Activated CD4-positive, alpha-beta T cell treated with anti-CD3 and anti-CD28 coated beads, Interleukin-2, amount 10 ng/mL, durations not matched to agents 24 days and 14 days (primary cell): ENCODE measurements at regions of chr16 and their contacts with region 1.

Region 1: DNA sequence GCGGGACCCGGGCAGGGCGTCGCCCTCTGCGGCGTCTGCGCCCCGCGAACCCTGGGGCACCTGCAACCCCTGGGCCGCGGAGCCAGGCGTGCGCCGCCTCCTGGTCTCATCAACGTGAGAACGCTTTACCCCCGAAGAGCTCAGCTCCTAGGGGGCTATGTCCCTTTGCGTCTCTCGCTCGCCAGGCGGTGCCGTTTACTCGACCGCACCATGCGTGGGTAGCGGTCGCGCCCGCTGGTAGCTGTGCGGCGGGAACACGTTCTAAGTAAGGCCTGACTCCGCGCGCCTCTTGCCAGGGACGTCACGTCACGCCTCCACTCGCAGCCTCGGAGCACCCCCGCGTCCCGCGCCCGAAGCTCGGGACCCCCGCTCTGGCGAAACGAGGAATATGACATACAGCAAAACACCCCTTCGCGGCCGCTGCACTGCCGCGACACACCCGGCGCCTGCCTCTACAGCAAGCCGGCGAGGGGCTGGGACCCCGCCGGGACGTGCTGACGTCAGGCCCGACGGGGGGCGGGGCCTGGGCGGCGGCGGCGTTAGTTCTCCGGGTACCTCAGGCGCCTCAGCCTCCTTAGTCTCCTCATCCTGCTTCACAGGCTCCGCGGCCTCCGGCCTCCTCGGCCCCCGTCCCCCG is at the start of gene RAB11FIP3:
- DNase-seq: peak; percentile 97
- H3K4me3 Mint-ChIP-seq: peak within 1 kb of the TSS; percentile 86
- H3K27ac Mint-ChIP-seq: peak within 1 kb of the TSS; percentile 88
- H3K4me1 Mint-ChIP-seq: peaks cover 25% of the 10 kb centered on the region
- H3K27me3 Mint-ChIP-seq: peaks cover 16% of the 10 kb centered on the region
- total RNA-seq, gene RAB11FIP3: 40.2 and 40.5 TPM in 2 replicates

Region 2: GRCh38 chr16:442976-443375 is 17.8 kb after region 1 on chr16:
- intact Hi-C with region 1: no loop called
- DNase-seq: no peak
- H3K4me3 Mint-ChIP-seq: no peak overlapping the region
- H3K27ac Mint-ChIP-seq: no peak overlapping the region
- H3K4me1 Mint-ChIP-seq: peaks cover 2% of the 10 kb centered on the region
- H3K27me3 Mint-ChIP-seq: no peaks in the 10 kb centered on the region

Region 3: DNA sequence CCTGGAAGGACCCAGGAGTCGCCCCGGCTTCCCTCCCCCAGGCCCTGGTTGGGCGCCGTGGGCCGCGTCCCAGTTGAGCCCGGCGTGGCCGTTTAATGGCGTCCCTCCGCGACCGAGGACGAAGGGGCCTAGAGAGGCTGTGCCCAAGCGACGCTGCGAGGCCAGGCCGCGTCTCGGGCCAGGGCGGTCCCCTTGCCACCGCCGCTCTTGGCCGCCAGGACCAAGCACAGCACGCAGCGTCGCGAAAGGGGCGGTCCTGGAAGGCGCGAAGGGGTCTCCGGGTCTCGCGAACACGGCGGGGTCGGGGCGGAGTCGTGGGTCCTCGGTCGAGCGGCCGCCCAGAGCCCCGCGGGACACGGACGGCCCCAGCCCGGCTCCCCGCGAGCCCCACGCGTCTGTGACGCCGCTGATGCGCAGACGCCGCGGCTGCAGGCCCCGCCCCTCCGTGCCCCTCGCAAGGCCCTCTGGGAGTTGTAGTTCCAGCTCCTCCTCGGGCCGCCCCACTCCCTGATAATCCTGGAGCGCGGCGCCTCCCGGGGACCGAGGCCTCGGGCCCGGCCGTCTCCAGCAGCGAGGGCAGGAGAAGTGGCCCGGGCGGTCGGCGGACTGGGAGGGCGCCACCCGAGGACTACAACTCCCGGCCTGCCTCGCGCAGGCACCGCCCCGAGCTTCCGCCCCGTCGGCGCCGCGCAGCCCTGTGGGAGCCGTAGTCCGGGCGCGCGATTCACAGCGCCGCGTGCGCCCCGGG is 102.0 kb after region 1 on chr16 and contains the start of gene CAPN15:
- intact Hi-C with region 1: loop called (anchors 2 kb)
- DNase-seq: peak; percentile 96
- H3K4me3 Mint-ChIP-seq: peak within 1 kb of the TSS; percentile 94
- H3K27ac Mint-ChIP-seq: peak within 1 kb of the TSS; percentile 95
- H3K4me1 Mint-ChIP-seq: peaks cover 18% of the 10 kb centered on the region
- H3K27me3 Mint-ChIP-seq: no peaks in the 10 kb centered on the region
- total RNA-seq, gene CAPN15: 121 and 124 TPM in 2 replicates

Region 4: DNA sequence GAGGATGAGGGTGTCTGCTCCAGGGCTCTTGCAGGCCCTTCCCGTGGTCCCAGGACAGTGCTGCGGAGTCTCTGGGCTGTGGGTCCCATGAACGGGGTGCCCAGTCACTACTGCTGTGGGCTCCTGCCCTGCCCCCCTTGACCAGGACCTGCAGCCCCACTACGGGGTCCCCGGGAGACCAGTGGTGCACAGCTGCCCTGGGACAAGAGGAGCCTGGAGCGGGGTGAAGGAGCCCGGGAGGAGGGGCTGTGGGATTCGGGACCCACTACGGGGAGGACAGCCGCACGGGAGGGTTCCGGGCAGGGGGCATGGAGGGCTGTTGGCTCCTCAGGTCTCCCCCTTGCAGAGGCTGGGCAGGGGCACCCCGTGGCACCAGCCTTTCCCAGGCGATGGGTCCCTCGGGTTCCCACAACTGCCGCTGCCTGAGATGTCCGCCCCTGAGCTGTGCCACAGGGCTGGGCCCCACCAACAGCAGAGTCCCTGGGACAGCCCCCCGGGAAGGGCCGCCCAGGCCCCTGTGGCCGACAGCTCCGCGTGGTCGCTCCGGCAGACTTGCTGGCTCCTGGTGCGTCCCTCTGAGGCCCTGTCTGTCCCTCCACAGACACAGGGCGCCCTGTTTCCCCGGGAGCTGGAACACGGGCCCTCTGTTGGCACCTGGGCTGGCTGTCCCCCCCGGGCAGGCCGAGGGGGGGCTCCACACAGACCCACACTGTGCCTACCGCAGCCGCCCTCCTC is 427.4 kb after region 1 on chr16:
- intact Hi-C with region 1: no loop called
- DNase-seq: no peak
- H3K4me3 Mint-ChIP-seq: no peak overlapping the region
- H3K27ac Mint-ChIP-seq: no peak overlapping the region
- H3K4me1 Mint-ChIP-seq: no peaks in the 10 kb centered on the region
- H3K27me3 Mint-ChIP-seq: no peaks in the 10 kb centered on the region

Region 5: DNA sequence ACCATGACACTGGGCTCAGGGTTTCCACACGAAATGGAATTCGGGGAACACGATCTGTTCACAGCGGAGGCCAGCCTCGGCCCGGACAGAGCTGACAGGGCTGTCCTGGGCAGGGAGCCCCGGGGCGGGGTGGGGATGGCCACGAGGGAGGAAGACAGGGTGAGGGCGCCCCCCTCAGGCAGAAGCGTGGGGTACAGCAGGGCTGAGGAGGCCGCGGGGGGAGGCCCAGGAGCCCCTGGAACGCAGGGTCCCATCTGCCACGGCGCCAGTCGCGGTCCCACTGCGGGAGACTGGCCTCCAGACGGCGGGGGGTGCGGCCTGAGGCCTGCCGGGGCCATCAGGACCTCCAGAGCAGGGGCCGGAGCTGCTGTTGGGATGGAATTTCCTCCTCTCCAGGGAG is 469.6 kb after region 1 on chr16:
- intact Hi-C with region 1: no loop called
- DNase-seq: no peak
- H3K4me3 Mint-ChIP-seq: no peak overlapping the region
- H3K27ac Mint-ChIP-seq: no peak overlapping the region
- H3K4me1 Mint-ChIP-seq: no peaks in the 10 kb centered on the region
- H3K27me3 Mint-ChIP-seq: no peaks in the 10 kb centered on the region